ENCODE measurements at regions of chr2 and their contacts with region 1.

Region 1: DNA sequence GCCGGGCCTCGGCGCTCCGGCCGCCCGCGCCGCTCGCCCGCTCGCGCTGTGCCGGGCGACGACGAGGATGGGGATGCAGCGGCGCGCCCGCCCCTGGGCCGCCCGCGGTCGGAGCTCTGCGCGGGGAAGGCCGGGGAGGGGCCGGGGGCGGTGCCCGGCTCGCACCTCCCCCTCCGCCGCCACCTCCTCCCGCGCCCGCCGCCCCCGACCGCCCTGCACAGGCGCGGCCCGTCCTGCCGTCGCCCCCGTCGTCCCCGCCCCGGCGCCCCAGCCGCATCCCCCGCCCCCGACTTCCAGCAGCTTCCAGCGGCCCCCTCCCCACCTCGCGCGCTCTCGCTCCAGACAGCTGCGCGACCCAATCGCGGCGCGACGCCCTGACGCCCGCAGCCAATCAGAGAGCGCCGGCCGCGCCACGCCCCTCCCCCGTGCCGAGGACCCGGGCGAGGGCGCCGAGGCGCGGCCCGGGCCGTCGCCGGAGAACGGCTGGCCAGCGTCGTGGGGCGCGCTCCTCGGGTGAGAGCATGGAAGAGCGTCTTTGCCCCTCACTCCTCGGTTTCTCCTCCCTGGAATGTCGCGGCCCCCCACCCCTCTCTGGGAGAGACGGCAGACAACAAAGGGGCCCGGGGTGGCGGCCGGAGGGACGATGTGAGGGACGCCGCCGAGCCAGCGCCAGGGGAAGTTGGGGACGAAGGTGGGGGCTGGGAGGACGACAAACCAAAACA is at the start of gene MBOAT2:
- DNase-seq: peak; percentile 60 to 84 (median 71)
- ATAC-seq: peak; percentile 92
- H3K4me3 ChIP-seq: peak within 1 kb of the TSS; percentile 60
- H3K4me3 Mint-ChIP-seq: peak within 1 kb of the TSS; percentile 77 to 92 (median 86)
- H3K27ac ChIP-seq: peak within 1 kb of the TSS; percentile 62
- H3K27ac Mint-ChIP-seq: peak within 1 kb of the TSS in 8 of 9 donors; percentile 56 to 86 (median 76)
- H3K4me1 ChIP-seq: peaks cover 0 to 3% of the 10 kb centered on the region in 2 donors
- H3K4me1 Mint-ChIP-seq: peaks cover 13 to 25% (median 22%) of the 10 kb centered on the region in 7 donors
- H3K27me3 ChIP-seq: peaks cover 0 to 3% of the 10 kb centered on the region in 2 donors
- H3K27me3 Mint-ChIP-seq: peaks cover 0 to 18% (median 4%) of the 10 kb centered on the region in 5 donors
- total RNA-seq, gene MBOAT2: 1.4 to 6.0 (median 2.3) TPM

Region 2: DNA sequence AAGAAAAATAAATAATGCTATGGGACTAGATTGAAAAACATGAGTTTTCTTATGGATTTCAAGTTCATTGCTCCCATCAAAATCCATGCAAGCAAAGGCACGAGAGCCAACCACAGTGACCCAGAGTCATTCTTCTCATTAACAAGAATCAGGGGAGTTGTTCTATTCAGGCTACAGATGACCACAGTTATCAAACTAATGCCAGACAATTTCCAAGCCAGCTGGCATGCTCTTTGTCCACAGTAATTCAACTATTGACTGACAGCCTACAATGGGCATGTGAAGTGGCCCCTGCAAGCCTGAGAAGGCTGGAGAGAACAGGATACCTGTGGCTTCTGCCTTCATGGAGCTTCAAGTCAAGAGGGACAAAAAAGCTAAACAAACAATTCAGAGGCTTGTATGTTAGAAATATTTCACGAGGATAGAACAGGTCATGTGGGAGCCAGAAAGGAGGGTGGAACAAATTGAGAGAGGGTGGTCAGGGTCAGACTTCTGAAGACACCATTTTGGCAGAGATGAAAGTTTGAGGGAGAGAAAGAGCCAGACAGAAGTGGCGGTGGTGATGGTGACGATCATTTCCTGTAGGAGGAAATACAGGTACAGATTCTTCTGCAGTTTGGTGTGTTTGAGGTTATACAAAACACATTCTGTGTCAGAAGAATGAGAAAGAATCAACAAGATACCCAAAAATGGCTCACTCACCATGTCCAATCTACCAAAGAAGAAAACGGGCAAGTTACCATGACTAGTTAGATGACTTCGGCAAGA is 1354.1 kb before region 1 on chr2:
- CTCF ChIA-PET with region 1: no interaction called
- POLR2A ChIA-PET with region 1: no interaction called
- intact Hi-C with region 1: no loop called
- DNase-seq: peak in 6 of 9 donors; percentile 27 to 52 (median 44)
- ATAC-seq: peak; percentile 72
- H3K4me3 ChIP-seq: no peak overlapping the region
- H3K4me3 Mint-ChIP-seq: peak overlapping the region; percentile 3 to 61 (median 44)
- H3K27ac ChIP-seq: no peak overlapping the region
- H3K27ac Mint-ChIP-seq: peak overlapping the region; percentile 12 to 94 (median 82)
- H3K4me1 ChIP-seq: peaks cover 9 to 15% of the 10 kb centered on the region in 2 donors
- H3K4me1 Mint-ChIP-seq: peaks cover 10 to 54% (median 36%) of the 10 kb centered on the region in 7 donors
- H3K27me3 ChIP-seq: no peaks in the 10 kb centered on the region
- H3K27me3 Mint-ChIP-seq: no peaks in the 10 kb centered on the region

Region 3: GRCh38 chr2:8836971-8837794 is 166.6 kb before region 1 on chr2 and contains the start of gene KIDINS220:
- CTCF ChIA-PET with region 1: no interaction called
- POLR2A ChIA-PET with region 1: no interaction called
- intact Hi-C with region 1: loop called (anchors 1 kb)
- DNase-seq: peak; percentile 71 to 87 (median 82)
- ATAC-seq: peak; percentile 99
- H3K4me3 ChIP-seq: peak within 1 kb of the TSS; percentile 69
- H3K4me3 Mint-ChIP-seq: peak within 1 kb of the TSS; percentile 96 to 100 (median 99)
- H3K27ac ChIP-seq: peak within 1 kb of the TSS; percentile 78
- H3K27ac Mint-ChIP-seq: peak within 1 kb of the TSS; percentile 94 to 100 (median 98)
- H3K4me1 ChIP-seq: peaks cover 23 to 29% of the 10 kb centered on the region in 2 donors
- H3K4me1 Mint-ChIP-seq: peaks cover 26 to 60% (median 51%) of the 10 kb centered on the region in 7 donors
- H3K27me3 ChIP-seq: no peaks in the 10 kb centered on the region
- H3K27me3 Mint-ChIP-seq: peaks cover 0 to 5% (median 0%) of the 10 kb centered on the region in 5 donors
- total RNA-seq, gene KIDINS220: 34.5 to 54.3 (median 48.3) TPM

Region 4: GRCh38 chr2:9205963-9206948 is 202.5 kb after region 1 on chr2 and contains the start of gene ASAP2:
- CTCF ChIA-PET with region 1: no interaction called
- POLR2A ChIA-PET with region 1: no interaction called
- intact Hi-C with region 1: loop called in 1 of 2 experiments (anchors 10 kb)
- DNase-seq: peak in 4 of 9 donors; percentile 7 to 71 (median 26)
- ATAC-seq: peak; percentile 80
- H3K4me3 ChIP-seq: no peak within 1 kb of the TSS
- H3K4me3 Mint-ChIP-seq: peak within 1 kb of the TSS; percentile 28 to 74 (median 64)
- H3K27ac ChIP-seq: no peak within 1 kb of the TSS
- H3K27ac Mint-ChIP-seq: no peak within 1 kb of the TSS
- H3K4me1 ChIP-seq: no peaks in the 10 kb centered on the region
- H3K4me1 Mint-ChIP-seq: peaks cover 0 to 10% (median 6%) of the 10 kb centered on the region in 7 donors
- H3K27me3 ChIP-seq: peaks cover 0 to 12% of the 10 kb centered on the region in 2 donors
- H3K27me3 Mint-ChIP-seq: peaks cover 33 to 60% (median 57%) of the 10 kb centered on the region in 5 donors
- total RNA-seq, gene ASAP2: 0.10 to 1.2 (median 0.45) TPM in 3 of 5 experiments, not detected in the others

Measured in naive thymus-derived CD4-positive, alpha-beta T cell (primary cell).